Activated naive CD4-positive, alpha-beta T cell treated with anti-CD3 and anti-CD28 coated beads for 36 hours (primary cell): ENCODE measurements at regions of chr17 and their contacts with region 1.

Region 1: DNA sequence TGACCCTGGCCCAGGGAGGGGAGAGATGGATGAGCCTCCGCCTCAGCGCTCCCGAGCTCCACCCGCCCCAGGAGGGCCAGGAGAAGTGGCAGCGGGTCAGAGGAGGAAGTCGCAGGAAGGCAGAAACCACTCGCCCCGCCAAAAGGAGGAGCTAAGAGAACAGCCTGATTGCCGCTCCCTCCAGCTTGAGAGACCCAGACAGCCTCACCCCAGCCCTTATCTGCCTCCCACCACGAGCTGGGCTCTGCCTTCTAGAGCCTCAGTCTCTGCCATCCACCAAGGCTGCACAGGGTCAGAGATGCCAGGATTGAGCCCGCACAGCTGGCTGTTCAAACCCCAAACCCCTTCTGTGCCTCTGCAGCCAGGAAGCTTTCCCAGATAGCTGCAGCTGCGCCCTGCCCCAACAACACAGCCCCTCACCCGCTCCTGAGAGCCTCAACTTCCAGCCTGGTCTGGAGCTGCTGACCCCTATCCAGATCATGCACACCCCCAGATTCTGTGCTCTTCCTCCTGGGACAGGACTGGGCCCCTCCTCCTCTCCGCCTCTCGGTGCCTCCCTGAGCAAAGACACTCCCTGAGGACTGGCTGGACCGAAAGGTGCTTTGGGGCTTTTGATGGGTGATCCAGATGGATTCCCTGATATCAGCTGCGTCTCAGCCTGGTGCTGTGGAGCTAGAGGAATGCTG is 1.0 kb upstream of the ATP2A3 start:
- DNase-seq: peak; percentile 83
- H3K4me3 Mint-ChIP-seq: peak overlapping the region; percentile 91
- H3K27ac Mint-ChIP-seq: peak overlapping the region; percentile 89
- H3K4me1 Mint-ChIP-seq: peaks cover 38% of the 10 kb centered on the region
- H3K27me3 Mint-ChIP-seq: no peaks in the 10 kb centered on the region

Region 2: GRCh38 chr17:3935140-3935542 is 30.1 kb before region 1 on chr17:
- CTCF ChIA-PET with region 1: interaction called, 4 read pairs
- intact Hi-C with region 1: loop called (anchors 2 kb)
- DNase-seq: peak; percentile 54
- H3K4me3 Mint-ChIP-seq: no peak overlapping the region
- H3K27ac Mint-ChIP-seq: no peak overlapping the region
- H3K4me1 Mint-ChIP-seq: no peaks in the 10 kb centered on the region
- H3K27me3 Mint-ChIP-seq: no peaks in the 10 kb centered on the region

Region 3: DNA sequence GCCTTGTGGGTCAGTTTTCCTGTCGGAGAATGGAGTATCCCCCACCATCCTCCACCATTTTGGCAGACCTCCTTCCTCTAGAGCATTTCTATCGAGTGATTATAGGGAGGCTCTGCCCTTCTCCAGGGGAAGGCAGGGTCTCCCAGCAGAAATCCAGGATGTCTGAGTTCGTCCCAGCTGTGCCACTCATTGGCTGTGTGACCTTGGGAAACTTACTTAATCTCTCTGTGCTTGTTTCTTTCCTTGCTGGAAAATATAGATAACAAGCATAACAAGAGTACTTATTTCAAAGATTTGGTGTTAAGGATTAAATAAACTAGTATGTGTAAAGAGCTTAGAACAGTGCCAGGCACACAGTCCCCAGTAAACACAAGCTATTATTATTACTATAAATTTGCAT is 15.8 kb before region 1 on chr17:
- CTCF ChIA-PET with region 1: no interaction called
- intact Hi-C with region 1: loop called (anchors 2 kb)
- DNase-seq: no peak
- H3K4me3 Mint-ChIP-seq: no peak overlapping the region
- H3K27ac Mint-ChIP-seq: no peak overlapping the region
- H3K4me1 Mint-ChIP-seq: no peaks in the 10 kb centered on the region
- H3K27me3 Mint-ChIP-seq: no peaks in the 10 kb centered on the region

Region 4: DNA sequence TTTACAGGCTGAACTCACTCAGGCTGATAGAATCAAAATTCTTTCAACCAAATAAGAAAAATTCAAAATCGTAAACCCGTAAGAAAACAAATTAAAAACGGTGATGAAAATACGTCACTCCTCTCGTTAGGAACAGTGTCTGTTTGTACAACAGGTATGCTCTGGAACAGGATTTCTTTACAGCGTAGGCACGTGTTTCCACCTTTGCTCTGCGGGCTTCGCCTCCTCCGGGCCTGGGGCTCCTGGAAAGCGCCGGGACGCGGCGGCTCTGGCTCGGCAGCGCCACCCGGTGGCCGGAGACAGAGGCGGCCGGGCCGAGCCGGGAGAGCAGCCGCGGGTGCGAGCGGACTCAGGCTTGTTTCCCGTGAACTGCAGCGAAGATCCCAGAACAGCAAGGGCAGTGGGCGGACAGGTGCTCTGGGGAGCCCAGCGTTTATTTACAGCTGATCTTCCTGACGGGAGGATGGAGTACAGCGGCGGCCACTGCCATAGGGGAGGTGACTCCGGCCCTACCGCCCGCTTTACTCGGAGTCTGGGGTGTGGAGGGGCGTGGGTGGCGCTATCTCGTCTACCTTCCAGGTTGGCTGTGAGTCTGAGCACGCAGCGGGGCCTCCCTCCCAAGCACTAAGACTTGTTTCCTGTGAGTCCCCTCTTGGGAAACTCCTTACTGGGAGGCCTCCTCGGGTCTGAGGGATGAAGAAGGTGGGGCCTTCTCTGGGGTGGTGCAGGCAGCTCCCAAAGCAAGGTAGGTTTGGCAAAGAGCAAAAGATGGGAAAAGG is 39.4 kb after region 1 on chr17:
- CTCF ChIA-PET with region 1: interaction called, 5 read pairs
- intact Hi-C with region 1: loop called (anchors 2 kb)
- DNase-seq: peak; percentile 62
- H3K4me3 Mint-ChIP-seq: no peak overlapping the region
- H3K27ac Mint-ChIP-seq: no peak overlapping the region
- H3K4me1 Mint-ChIP-seq: peaks cover 4% of the 10 kb centered on the region
- H3K27me3 Mint-ChIP-seq: no peaks in the 10 kb centered on the region

Region 5: GRCh38 chr17:4087906-4088693 is 122.8 kb after region 1 on chr17:
- CTCF ChIA-PET with region 1: no interaction called
- intact Hi-C with region 1: loop called (anchors 1 kb)
- DNase-seq: no peak
- H3K4me3 Mint-ChIP-seq: no peak overlapping the region
- H3K27ac Mint-ChIP-seq: no peak overlapping the region
- H3K4me1 Mint-ChIP-seq: peaks cover 13% of the 10 kb centered on the region
- H3K27me3 Mint-ChIP-seq: no peaks in the 10 kb centered on the region

Region 6: GRCh38 chr17:4366327-4367063 is 401.2 kb after region 1 on chr17 and contains the start of gene UBE2G1:
- CTCF ChIA-PET with region 1: no interaction called
- intact Hi-C with region 1: loop called (anchors 10 kb)
- DNase-seq: peak; percentile 99
- H3K4me3 Mint-ChIP-seq: peak within 1 kb of the TSS; percentile 71
- H3K27ac Mint-ChIP-seq: peak within 1 kb of the TSS; percentile 81
- H3K4me1 Mint-ChIP-seq: peaks cover 31% of the 10 kb centered on the region
- H3K27me3 Mint-ChIP-seq: no peaks in the 10 kb centered on the region
- total RNA-seq, gene UBE2G1: 33.3 to 36.1 TPM